Psoas muscle (tissue), 8 donors: ENCODE measurements at regions of chr21 and their contacts with region 1.

Region 1: GRCh38 chr21:42174173-42174572 is 44.8 kb upstream of the ABCG1 start:
- DNase-seq: no peak
- ATAC-seq: no peak
- H3K4me3 ChIP-seq: no peak overlapping the region
- H3K27ac ChIP-seq: no peak overlapping the region
- H3K4me1 ChIP-seq: no peaks in the 10 kb centered on the region
- H3K27me3 ChIP-seq: no peaks in the 10 kb centered on the region
- CTCF ChIP-seq: no peak

Region 2: DNA sequence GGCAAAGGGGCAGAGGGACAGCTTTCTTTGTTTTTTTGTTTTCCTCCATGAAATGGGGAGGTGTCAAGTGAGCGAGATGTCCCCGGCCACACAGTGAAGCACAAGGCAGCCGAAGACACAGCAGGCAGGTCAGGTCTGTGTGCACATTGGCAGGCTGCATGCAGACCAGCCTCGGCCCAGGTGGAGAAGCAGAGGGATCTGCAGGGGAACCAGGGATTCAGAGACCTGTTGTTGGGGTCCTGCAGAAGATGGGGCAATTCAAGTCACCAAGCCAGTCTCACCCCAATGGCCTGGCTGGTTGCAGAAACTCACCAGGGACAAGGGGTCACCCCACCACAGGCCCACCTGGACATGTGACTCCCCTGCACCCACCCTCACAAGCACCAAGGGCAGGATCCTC is 40.7 kb after region 1 on chr21:
- intact Hi-C with region 1: loop called in 1 of 2 experiments (anchors 1 kb)
- DNase-seq: no peak
- ATAC-seq: no peak
- H3K4me3 ChIP-seq: no peak overlapping the region
- H3K27ac ChIP-seq: no peak overlapping the region
- H3K4me1 ChIP-seq: no peaks in the 10 kb centered on the region
- H3K27me3 ChIP-seq: no peaks in the 10 kb centered on the region
- CTCF ChIP-seq: no peak

Region 3: GRCh38 chr21:42276526-42277154 is 102.5 kb after region 1 on chr21:
- intact Hi-C with region 1: no loop called
- DNase-seq: no peak
- ATAC-seq: no peak
- H3K4me3 ChIP-seq: no peak overlapping the region
- H3K27ac ChIP-seq: no peak overlapping the region
- H3K4me1 ChIP-seq: no peaks in the 10 kb centered on the region
- H3K27me3 ChIP-seq: no peaks in the 10 kb centered on the region
- CTCF ChIP-seq: no peak